Prostate gland (tissue), 2 donors: ENCODE measurements at regions of chr1 and their contacts with region 1.

Region 1: GRCh38 chr1:205273551-205273982 is 45.8 kb downstream of the TMCC2 start:
- DNase-seq: peak; percentile 87
- H3K4me3 ChIP-seq: no peak overlapping the region
- H3K27ac ChIP-seq: no peak overlapping the region
- H3K4me1 ChIP-seq: no peaks in the 10 kb centered on the region
- H3K27me3 ChIP-seq: no peaks in the 10 kb centered on the region
- CTCF ChIP-seq: peak; percentile 98 to 99 (median 98)
- POLR2A ChIP-seq: no peak

Region 2: GRCh38 chr1:205325334-205325884 is 51.8 kb after region 1 on chr1:
- intact Hi-C with region 1: loop called (anchors 1 kb)
- DNase-seq: peak; percentile 64
- H3K4me3 ChIP-seq: no peak overlapping the region
- H3K27ac ChIP-seq: no peak overlapping the region
- H3K4me1 ChIP-seq: no peaks in the 10 kb centered on the region
- H3K27me3 ChIP-seq: no peaks in the 10 kb centered on the region
- CTCF ChIP-seq: peak; percentile 42 to 86 (median 77)
- POLR2A ChIP-seq: no peak

Region 3: DNA sequence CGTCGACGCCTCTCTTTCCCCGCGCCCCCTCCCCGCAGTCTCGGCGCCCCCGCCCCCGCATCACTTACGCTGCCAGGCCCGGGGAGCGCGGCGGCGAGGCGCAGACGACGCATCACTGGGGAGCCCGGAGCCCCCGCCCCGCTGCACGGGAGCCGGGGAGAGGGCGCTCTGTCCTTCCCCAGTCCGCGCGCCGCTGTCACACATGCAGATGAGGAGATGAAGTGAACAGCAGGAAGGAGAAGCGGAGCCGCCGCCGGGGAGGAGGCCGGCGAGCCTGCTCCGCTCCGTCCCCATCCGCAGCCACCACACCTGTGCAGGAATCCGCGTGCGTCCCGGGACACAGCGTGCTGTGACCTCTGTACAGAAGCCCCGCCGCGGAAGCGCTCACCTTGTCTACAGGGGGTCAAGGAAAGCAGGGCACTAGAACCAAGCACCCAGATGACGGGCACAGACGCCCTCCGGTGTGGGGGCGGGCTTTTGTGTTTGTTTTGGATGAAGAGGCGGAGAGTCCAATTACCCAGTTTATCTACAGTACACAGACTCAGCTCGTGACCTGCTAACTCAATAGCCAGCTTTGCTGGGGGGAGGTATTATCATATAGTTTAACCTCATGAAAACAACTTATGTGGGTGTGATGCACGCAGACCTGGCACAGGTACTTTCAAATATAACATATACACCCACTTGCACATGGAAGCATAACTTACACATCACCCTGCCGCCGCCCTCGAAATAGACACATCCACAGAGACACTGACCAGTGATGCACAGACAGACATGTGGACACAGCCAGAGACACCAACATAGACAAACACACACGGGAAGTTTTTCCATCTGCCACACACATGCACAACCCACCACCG is 70.7 kb after region 1 on chr1:
- intact Hi-C with region 1: no loop called
- DNase-seq: no peak
- H3K4me3 ChIP-seq: peak overlapping the region in 1 of 2 donors; percentile 16
- H3K27ac ChIP-seq: no peak overlapping the region
- H3K4me1 ChIP-seq: peaks cover 12% of the 10 kb centered on the region
- H3K27me3 ChIP-seq: peaks cover 6% of the 10 kb centered on the region
- CTCF ChIP-seq: no peak
- POLR2A ChIP-seq: no peak